ENCODE measurements at regions of chr1 and their contacts with region 1.

Region 1: DNA sequence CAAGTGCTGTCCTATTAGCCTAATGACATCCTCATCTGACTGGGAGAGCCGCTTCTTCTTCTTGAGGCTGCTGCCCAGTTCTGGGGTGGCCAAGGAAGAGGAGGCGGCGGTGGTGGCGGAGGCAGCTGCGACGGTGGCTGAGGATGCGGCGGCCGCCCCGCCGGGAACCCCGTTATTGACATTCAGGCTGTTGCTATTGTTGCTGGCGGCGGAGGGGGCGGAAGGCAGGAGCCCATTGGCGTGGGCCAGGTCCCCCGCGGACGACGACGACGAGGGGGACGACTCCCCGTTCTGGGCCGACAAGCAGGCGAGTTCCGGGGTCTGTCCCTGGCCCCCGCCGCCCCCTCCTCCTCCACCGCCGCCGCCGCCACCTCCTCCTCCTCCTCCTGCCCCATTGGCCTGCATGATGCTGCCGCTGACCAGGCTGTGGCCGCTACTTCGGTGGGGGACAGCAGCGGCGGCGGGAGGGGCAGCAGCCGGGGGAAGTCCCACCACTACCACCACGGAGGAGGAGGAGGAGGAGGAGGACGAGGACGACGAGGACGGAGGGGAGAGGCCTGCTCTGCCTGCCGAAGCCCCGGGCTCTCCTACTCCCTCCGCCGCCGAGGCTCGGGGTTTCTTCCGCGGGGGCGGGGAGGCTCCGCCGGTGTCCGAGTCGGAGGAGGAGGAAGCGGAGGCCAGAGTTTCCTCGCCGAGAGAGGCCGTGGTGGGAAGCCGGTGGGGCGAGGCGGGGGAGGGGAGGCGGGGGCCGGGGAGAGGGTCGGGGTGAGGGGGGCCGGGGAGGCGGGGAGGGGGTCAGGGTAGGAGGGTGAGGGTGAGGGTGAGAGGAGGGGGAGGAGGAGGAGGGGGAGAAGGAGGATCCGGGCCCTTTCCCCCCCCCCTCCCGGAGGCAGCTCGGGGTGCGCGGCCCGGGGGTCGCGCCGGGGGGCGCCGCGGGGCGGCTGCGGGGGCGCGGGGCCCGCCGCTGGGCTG is 610 bp downstream of the WDR26 start:
- DNase-seq: peak in 8 of 10 donors; percentile 29 to 63 (median 41)
- H3K4me3 ChIP-seq: peak overlapping the region; percentile 22 to 97 (median 92)
- H3K27ac ChIP-seq: peak overlapping the region; percentile 33 to 98 (median 93)
- H3K27me3 ChIP-seq: no peaks in the 10 kb centered on the region
- CTCF ChIP-seq: no peak

Region 2: GRCh38 chr1:224356685-224357625 is 77.0 kb before region 1 on chr1 and contains the start of gene CNIH4:
- intact Hi-C with region 1: loop called (anchors 2 kb)
- DNase-seq: peak; percentile 75 to 95 (median 92)
- H3K4me3 ChIP-seq: peak within 1 kb of the TSS; percentile 61 to 98 (median 91)
- H3K27ac ChIP-seq: peak within 1 kb of the TSS in 57 of 59 donors; percentile 16 to 95 (median 85)
- H3K27me3 ChIP-seq: no peaks in the 10 kb centered on the region
- CTCF ChIP-seq: peak in 25 of 56 donors; percentile 11 to 56 (median 26)
- total RNA-seq, gene CNIH4: 20.5 to 44.8 (median 32.7) TPM

Region 3: GRCh38 chr1:224579526-224579925 is 145.5 kb after region 1 on chr1:
- intact Hi-C with region 1: no loop called
- DNase-seq: no peak
- H3K4me3 ChIP-seq: no peak overlapping the region
- H3K27ac ChIP-seq: no peak overlapping the region
- H3K27me3 ChIP-seq: no peaks in the 10 kb centered on the region
- CTCF ChIP-seq: no peak

Measured in dorsolateral prefrontal cortex (tissue), 120 donors.